ENCODE measurements at regions of chr14 and their contacts with region 1.

Region 1: DNA sequence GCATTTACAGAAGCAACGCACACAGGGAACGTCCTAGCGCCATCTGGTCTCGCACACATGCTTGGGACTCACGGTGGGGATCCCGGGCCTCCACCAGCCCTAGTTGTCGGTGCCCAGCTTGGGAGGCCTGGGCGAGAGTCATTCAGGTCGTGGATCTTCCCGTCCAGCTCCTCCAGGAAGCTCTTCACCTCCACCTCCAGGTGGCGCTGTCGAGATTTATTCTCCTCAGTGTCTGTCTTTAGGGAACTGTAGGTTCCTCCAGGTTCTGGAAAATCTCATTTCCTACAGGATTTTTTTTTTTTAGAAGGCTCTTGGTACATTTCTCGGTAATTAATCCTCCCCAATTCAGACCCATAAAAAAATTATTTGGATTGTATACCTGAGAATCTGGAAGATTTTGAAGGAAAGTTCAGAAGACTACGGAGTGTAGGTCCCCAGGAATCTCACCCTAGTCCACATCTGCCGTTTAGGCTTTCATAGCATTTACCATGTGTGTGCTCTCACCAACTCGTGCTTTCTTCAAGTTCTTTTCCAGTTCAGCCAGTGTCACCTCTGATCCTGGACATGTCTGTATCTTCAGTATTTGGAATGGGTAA is 910.0 kb downstream of the TMEM121 start:
- DNase-seq: peak; percentile 38
- ATAC-seq: no peak
- H3K4me3 ChIP-seq: no peak overlapping the region
- H3K4me3 Mint-ChIP-seq: no peak overlapping the region
- H3K27ac ChIP-seq: no peak overlapping the region
- H3K27ac Mint-ChIP-seq: no peak overlapping the region
- H3K4me1 ChIP-seq: no peaks in the 10 kb centered on the region
- H3K4me1 Mint-ChIP-seq: no peaks in the 10 kb centered on the region
- H3K27me3 ChIP-seq: peaks cover 0 to 4% (median 0%) of the 10 kb centered on the region in 4 experiments
- H3K27me3 Mint-ChIP-seq: peaks cover 23% of the 10 kb centered on the region
- CTCF ChIP-seq: peak; percentile 80

Region 2: DNA sequence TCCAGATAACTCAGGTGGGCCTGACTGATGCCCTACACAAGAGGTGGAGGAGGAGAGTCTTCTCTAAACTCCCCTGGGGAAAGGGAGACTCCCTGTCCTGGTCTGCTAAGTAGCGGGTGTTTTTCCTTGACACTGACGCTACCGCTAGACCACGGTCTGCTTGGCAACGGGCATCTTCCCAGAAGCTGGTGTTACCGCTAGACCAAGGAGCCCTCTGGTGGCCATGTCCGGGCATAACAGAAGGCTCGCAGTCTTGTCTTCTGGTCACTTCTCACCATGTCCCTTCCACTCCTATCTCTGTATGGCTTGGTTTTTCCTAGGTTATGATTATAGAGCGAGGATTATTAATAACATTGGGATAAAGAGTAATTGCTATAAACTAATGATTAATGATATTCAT is 55.4 kb after region 1 on chr14:
- CTCF ChIA-PET with region 1: interaction called, 13 read pairs
- POLR2A ChIA-PET with region 1: no interaction called
- intact Hi-C with region 1: no loop called
- DNase-seq: peak; percentile 25
- ATAC-seq: no peak
- H3K4me3 ChIP-seq: no peak overlapping the region
- H3K4me3 Mint-ChIP-seq: no peak overlapping the region
- H3K27ac ChIP-seq: no peak overlapping the region
- H3K27ac Mint-ChIP-seq: no peak overlapping the region
- H3K4me1 ChIP-seq: peaks cover 10 to 12% of the 10 kb centered on the region in 2 donors
- H3K4me1 Mint-ChIP-seq: peaks cover 19% of the 10 kb centered on the region
- H3K27me3 ChIP-seq: no peaks in the 10 kb centered on the region
- H3K27me3 Mint-ChIP-seq: peaks cover 4% of the 10 kb centered on the region
- CTCF ChIP-seq: peak; percentile 55

Region 3: DNA sequence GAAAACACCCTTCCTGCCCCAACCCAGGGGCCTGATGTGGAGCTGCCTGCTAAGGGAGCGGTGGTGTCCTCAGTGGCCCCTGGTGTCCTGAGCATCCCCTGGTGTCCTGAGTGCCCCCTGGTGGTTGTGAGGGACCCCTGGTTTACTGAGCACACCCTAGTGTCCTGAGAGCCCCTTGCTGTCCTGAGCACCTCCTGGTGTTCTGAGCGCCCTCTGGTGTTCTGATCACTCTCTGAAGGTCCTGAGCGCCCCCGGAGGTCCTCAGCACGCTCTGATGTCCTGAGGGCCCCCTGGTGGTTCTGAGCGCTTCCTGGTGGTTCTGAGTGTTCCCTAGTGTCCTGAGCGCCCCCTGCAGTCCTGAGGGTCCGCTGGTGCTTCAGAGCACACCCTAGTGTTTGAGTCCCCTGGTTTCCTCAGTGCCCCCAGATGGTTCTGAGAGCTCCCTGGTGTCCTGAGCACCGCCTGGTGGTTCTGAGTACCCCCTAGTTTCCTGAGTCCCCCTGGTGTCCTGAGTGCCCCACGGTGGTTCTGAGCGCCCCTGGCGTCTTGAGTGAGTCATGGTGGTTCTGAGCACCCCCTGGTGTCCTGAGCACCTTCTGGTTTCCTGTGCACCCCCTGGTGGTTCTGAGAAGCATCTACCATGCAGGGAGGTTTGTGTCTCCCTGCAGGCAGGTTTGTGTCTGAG is 94.2 kb after region 1 on chr14:
- CTCF ChIA-PET with region 1: interaction called, 12 read pairs
- POLR2A ChIA-PET with region 1: no interaction called
- intact Hi-C with region 1: no loop called
- DNase-seq: peak; percentile 69
- ATAC-seq: peak; percentile 79
- H3K4me3 ChIP-seq: no peak overlapping the region
- H3K4me3 Mint-ChIP-seq: no peak overlapping the region
- H3K27ac ChIP-seq: no peak overlapping the region
- H3K27ac Mint-ChIP-seq: no peak overlapping the region
- H3K4me1 ChIP-seq: no peaks in the 10 kb centered on the region
- H3K4me1 Mint-ChIP-seq: peaks cover 3% of the 10 kb centered on the region
- H3K27me3 ChIP-seq: peaks cover 0 to 3% (median 0%) of the 10 kb centered on the region in 4 experiments
- H3K27me3 Mint-ChIP-seq: peaks cover 14% of the 10 kb centered on the region
- CTCF ChIP-seq: peak; percentile 63

Region 4: DNA sequence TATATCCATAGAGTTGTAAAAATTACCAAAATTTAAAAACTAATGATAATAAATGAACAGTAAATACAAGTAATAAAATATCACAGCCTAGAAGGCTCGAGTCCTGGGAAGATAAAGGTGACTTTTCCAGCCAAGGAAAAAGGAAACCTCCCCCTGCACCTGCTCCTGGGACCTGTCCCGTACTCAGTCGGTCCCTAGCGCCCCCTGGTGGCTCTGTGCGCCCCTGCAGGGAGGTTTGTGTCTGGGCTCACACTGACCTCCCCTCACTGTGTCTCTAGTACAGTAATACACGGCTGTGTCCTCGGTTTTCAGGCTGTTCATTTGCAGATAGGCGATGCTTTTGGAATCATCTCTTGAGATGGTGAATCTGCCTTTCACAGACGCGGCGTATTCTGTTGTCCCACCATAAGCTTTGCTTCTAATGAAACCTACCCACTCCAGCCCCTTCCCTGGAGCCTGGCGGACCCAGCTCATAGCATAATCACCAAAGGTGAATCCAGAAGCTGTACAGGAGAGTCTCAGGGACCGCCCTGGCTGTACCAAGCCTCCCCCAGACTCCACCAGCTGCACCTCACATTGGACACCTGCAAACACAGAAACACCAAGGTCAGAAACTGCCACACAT is 120.4 kb after region 1 on chr14:
- CTCF ChIA-PET with region 1: interaction called, 15 read pairs
- POLR2A ChIA-PET with region 1: no interaction called
- intact Hi-C with region 1: no loop called
- DNase-seq: peak; percentile 77
- ATAC-seq: peak; percentile 75
- H3K4me3 ChIP-seq: no peak overlapping the region
- H3K4me3 Mint-ChIP-seq: no peak overlapping the region
- H3K27ac ChIP-seq: no peak overlapping the region
- H3K27ac Mint-ChIP-seq: peak overlapping the region; percentile 50
- H3K4me1 ChIP-seq: no peaks in the 10 kb centered on the region
- H3K4me1 Mint-ChIP-seq: peaks cover 2% of the 10 kb centered on the region
- H3K27me3 ChIP-seq: peaks cover 0 to 4% (median 0%) of the 10 kb centered on the region in 4 experiments
- H3K27me3 Mint-ChIP-seq: peaks cover 11% of the 10 kb centered on the region
- CTCF ChIP-seq: peak; percentile 85

Region 5: GRCh38 chr14:106611272-106611671 is 174.9 kb after region 1 on chr14:
- CTCF ChIA-PET with region 1: no interaction called
- POLR2A ChIA-PET with region 1: no interaction called
- intact Hi-C with region 1: no loop called
- DNase-seq: no peak
- ATAC-seq: no peak
- H3K4me3 ChIP-seq: no peak overlapping the region
- H3K4me3 Mint-ChIP-seq: no peak overlapping the region
- H3K27ac ChIP-seq: no peak overlapping the region
- H3K27ac Mint-ChIP-seq: no peak overlapping the region
- H3K4me1 ChIP-seq: peaks cover 0 to 1% of the 10 kb centered on the region in 2 donors
- H3K4me1 Mint-ChIP-seq: peaks cover 2% of the 10 kb centered on the region
- H3K27me3 ChIP-seq: peaks cover 0 to 13% (median 4%) of the 10 kb centered on the region in 4 experiments
- H3K27me3 Mint-ChIP-seq: peaks cover 53% of the 10 kb centered on the region
- CTCF ChIP-seq: no peak